ENCODE measurements at regions of chr12 and their contacts with region 1.

Region 1: DNA sequence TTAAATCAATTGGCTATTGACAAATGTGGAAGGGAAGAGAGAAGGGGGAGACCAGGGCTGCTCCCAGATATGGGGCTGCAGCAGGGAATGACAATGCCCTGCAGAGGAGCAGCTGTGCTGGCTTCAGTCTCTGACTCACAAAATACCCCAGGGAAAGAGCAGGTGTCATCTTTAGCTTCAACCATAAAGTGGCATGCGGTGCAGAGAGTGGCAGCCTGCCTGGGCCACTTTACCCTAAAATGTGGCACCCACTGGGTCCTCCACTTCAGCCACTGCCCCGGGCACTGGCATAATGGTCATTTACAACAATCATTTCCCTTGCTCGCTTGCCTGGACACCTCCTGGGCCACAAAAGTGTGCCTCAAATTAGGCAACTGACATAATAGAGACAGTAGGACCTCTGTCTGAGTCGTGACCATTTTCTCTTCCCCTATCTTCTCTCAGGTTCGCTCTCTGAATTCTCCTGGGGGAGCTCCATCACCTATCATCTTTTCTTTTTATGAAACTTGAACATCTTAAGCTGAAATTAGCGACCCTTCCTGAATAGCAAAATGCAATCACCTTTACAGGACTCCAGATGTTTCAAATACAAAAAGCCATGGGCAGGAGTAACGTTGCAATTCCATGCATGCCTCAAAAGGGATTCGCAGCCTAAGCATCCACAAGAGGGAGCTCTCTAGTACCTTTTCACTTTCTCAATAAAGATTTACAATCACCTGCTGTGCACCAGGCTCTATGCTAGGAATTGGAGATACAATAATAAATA is 179.9 kb upstream of the ATF7IP start:
- DNase-seq: peak; percentile 2
- H3K4me3 ChIP-seq: no peak overlapping the region
- H3K27ac ChIP-seq: no peak overlapping the region
- H3K27me3 ChIP-seq: peaks cover 3% of the 10 kb centered on the region
- CTCF ChIP-seq: peak; percentile 76

Region 2: GRCh38 chr12:14167005-14167628 is 18.5 kb before region 1 on chr12:
- CTCF ChIA-PET with region 1: interaction called, 18 read pairs
- POLR2A ChIA-PET with region 1: no interaction called
- DNase-seq: peak; percentile 24
- H3K4me3 ChIP-seq: no peak overlapping the region
- H3K27ac ChIP-seq: no peak overlapping the region
- H3K27me3 ChIP-seq: no peaks in the 10 kb centered on the region
- CTCF ChIP-seq: peak; percentile 98

Region 3: DNA sequence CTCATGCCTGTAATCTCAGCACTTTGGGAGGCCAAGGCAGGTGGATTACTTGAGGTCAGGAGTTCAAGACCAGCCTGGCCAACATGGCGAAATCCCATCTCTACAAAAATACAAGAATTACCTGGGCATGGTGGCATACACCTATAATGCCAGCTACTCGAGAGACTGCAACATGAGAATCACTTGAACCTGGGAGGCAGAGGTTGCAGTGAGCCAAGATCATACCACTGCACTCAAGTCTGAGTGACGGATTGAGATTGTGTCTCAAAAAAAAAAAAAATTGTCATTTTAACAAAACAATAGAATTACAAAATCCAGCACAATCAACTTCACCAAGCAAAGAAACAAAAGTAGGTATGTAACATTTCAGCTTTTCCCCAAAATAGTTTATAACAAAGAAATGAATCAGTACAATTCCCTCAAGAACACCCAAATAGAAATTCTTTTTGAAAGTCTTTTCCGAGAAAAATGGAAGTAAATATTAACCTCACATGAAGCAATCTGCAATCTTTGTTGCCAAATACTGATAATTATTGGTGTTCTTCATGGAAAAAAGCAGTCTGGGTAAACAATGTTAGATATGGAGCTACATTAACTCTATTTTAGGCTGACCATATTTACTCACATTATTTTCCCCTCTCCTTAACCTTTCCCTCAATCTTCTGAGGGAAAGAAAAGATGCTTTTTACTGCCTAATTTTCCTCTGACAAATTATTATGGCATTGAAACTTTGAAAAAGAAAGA is 14.0 kb after region 1 on chr12:
- CTCF ChIA-PET with region 1: interaction called, 11 read pairs
- POLR2A ChIA-PET with region 1: interaction called, 3 read pairs
- DNase-seq: no peak
- H3K4me3 ChIP-seq: no peak overlapping the region
- H3K27ac ChIP-seq: no peak overlapping the region
- H3K27me3 ChIP-seq: no peaks in the 10 kb centered on the region
- CTCF ChIP-seq: no peak

Region 4: GRCh38 chr12:14249368-14249767 is 63.8 kb after region 1 on chr12:
- CTCF ChIA-PET with region 1: no interaction called
- POLR2A ChIA-PET with region 1: no interaction called
- DNase-seq: no peak
- H3K4me3 ChIP-seq: no peak overlapping the region
- H3K27ac ChIP-seq: no peak overlapping the region
- H3K27me3 ChIP-seq: no peaks in the 10 kb centered on the region
- CTCF ChIP-seq: no peak

Region 5: GRCh38 chr12:14618983-14619382 is 433.4 kb after region 1 on chr12:
- CTCF ChIA-PET with region 1: interaction called, 16 read pairs
- POLR2A ChIA-PET with region 1: no interaction called
- DNase-seq: no peak
- H3K4me3 ChIP-seq: no peak overlapping the region
- H3K27ac ChIP-seq: no peak overlapping the region
- H3K27me3 ChIP-seq: no peaks in the 10 kb centered on the region
- CTCF ChIP-seq: peak; percentile 41

Region 6: GRCh38 chr12:14664510-14664909 is 478.9 kb after region 1 on chr12:
- CTCF ChIA-PET with region 1: interaction called, 13 read pairs
- POLR2A ChIA-PET with region 1: no interaction called
- DNase-seq: no peak
- H3K4me3 ChIP-seq: no peak overlapping the region
- H3K27ac ChIP-seq: no peak overlapping the region
- H3K27me3 ChIP-seq: no peaks in the 10 kb centered on the region
- CTCF ChIP-seq: peak; percentile 56